PC-9 (cell line): ENCODE measurements at regions of chr10 and their contacts with region 1.

Region 1: DNA sequence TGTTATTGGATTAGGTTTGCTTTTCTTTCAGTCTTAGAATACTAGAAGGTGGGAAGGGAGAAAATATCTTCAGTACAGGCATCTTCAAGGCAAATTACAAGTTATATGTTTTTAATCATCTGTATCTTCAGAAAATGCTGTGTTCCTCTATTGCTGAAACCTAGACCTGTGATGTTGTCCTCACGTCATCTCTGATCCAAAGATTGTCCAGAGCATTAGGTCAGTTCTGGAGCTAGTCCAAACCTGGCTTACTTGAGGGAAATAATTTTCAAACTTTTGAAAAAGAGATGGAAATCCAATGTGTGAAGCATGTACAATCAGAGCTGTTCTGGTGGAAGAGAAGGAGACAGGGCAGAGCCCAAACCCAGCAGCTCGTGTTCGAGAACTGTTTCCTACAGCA is 217.3 kb downstream of the ZEB1 start:
- DNase-seq: no peak
- H3K4me3 ChIP-seq: no peak overlapping the region
- H3K27ac ChIP-seq: no peak overlapping the region
- H3K4me1 ChIP-seq: no peaks in the 10 kb centered on the region
- H3K27me3 ChIP-seq: no peaks in the 10 kb centered on the region
- CTCF ChIP-seq: no peak

Region 2: GRCh38 chr10:30792025-30792424 is 744.3 kb before region 1 on chr10:
- CTCF ChIA-PET with region 1: no interaction called
- POLR2A ChIA-PET with region 1: interaction called, 20 read pairs
- intact Hi-C with region 1: no loop called
- DNase-seq: no peak
- H3K4me3 ChIP-seq: no peak overlapping the region
- H3K27ac ChIP-seq: no peak overlapping the region
- H3K4me1 ChIP-seq: no peaks in the 10 kb centered on the region
- H3K27me3 ChIP-seq: no peaks in the 10 kb centered on the region
- CTCF ChIP-seq: no peak

Region 3: DNA sequence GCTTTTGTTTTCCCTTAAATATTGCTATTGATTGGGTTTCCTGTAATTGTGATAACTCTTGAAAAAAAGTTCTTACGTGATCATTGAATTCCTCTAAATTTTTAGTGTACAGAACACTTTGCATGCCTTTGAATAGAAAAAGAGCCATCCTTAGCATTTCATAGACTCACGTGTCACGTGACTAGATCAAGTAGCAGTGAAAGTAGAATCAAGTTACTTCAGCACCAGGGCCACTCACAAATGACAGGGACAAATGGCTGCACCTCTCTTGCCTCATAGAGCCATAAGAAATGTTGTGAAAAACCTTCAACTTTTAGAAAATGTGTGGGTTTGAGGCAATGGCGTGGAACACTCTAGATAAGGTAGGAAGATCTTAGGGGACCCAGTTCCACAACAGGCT is 13.5 kb before region 1 on chr10:
- CTCF ChIA-PET with region 1: interaction called, 10 read pairs
- POLR2A ChIA-PET with region 1: no interaction called
- intact Hi-C with region 1: no loop called
- DNase-seq: no peak
- H3K4me3 ChIP-seq: no peak overlapping the region
- H3K27ac ChIP-seq: no peak overlapping the region
- H3K4me1 ChIP-seq: no peaks in the 10 kb centered on the region
- H3K27me3 ChIP-seq: no peaks in the 10 kb centered on the region
- CTCF ChIP-seq: no peak

Region 4: DNA sequence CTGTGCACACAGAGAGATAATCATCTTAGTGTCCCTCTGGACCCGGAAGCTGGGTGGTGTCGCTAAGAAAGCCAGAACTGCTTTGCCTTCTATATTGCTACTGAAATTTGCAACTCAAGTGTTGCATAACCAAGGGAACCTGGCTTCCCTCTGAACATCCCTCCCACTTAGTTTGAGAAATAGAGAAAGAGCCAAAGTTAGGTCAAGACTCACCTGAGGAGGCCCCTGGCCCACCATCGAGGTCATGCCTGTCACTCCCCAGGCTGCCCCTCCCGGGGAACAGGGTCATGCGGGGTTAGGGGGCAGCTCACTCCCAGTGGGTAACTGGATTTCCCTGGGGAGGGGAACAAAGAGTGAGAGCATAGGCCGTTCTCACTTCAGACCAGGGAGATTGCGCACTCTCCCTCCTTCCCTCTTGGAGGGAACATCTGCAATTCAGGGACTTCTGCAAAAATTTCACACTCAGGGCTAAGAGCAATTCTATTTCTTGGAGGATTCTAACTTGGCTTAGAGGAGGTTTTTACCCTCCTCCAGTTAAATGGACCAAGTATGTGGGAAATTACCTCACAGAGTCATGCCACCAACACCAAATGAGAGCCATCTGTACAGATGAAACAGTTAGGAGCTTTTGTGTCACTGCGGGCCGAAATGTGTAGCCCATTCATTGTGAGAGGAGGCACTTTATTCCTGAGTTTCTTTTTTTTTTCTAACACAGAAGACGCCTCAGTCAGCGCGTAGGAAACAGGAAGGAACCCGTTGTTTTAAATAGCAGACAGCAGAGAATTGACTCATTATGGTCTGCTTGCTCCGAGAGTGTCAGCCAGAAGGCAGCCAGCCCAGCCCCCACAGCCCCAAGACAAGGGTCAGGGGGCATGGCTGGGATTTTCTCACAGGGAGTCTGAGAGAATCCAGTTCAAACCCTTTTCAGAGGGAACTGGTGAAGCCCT is 171.1 kb after region 1 on chr10:
- CTCF ChIA-PET with region 1: no interaction called
- POLR2A ChIA-PET with region 1: no interaction called
- intact Hi-C with region 1: no loop called
- DNase-seq: no peak
- H3K4me3 ChIP-seq: no peak overlapping the region
- H3K27ac ChIP-seq: no peak overlapping the region
- H3K4me1 ChIP-seq: no peaks in the 10 kb centered on the region
- H3K27me3 ChIP-seq: no peaks in the 10 kb centered on the region
- CTCF ChIP-seq: no peak